PC-3 (cell line): ENCODE measurements at regions of chr19 and their contacts with region 1.

Region 1: GRCh38 chr19:13637664-13638063 is 126.7 kb upstream of the MRI1 start:
- DNase-seq: peak; percentile 90
- ATAC-seq: peak; percentile 84
- H3K4me3 ChIP-seq: no peak overlapping the region
- H3K27ac ChIP-seq: peak overlapping the region; percentile 72
- H3K4me1 ChIP-seq: peaks cover 19% of the 10 kb centered on the region
- H3K27me3 ChIP-seq: no peaks in the 10 kb centered on the region
- CTCF ChIP-seq: no peak

Region 2: GRCh38 chr19:13162518-13163314 is 474.9 kb before region 1 on chr19:
- CTCF ChIA-PET with region 1: no interaction called
- POLR2A ChIA-PET with region 1: interaction called, 18 read pairs
- intact Hi-C with region 1: no loop called
- DNase-seq: peak; percentile 100
- ATAC-seq: peak; percentile 50
- H3K4me3 ChIP-seq: peak overlapping the region; percentile 67
- H3K27ac ChIP-seq: peak overlapping the region; percentile 97
- H3K4me1 ChIP-seq: peaks cover 63% of the 10 kb centered on the region
- H3K27me3 ChIP-seq: no peaks in the 10 kb centered on the region
- CTCF ChIP-seq: no peak

Region 3: GRCh38 chr19:13597640-13598039 is 40.0 kb before region 1 on chr19:
- CTCF ChIA-PET with region 1: no interaction called
- POLR2A ChIA-PET with region 1: no interaction called
- intact Hi-C with region 1: no loop called
- DNase-seq: peak; percentile 83
- ATAC-seq: peak; percentile 94
- H3K4me3 ChIP-seq: no peak overlapping the region
- H3K27ac ChIP-seq: no peak overlapping the region
- H3K4me1 ChIP-seq: peaks cover 5% of the 10 kb centered on the region; the same call in 1 of the 2 replicates
- H3K27me3 ChIP-seq: no peaks in the 10 kb centered on the region
- CTCF ChIP-seq: peak; percentile 88